HepG2 (cell line): ENCODE measurements at regions of chr3 and their contacts with region 1.

Region 1: DNA sequence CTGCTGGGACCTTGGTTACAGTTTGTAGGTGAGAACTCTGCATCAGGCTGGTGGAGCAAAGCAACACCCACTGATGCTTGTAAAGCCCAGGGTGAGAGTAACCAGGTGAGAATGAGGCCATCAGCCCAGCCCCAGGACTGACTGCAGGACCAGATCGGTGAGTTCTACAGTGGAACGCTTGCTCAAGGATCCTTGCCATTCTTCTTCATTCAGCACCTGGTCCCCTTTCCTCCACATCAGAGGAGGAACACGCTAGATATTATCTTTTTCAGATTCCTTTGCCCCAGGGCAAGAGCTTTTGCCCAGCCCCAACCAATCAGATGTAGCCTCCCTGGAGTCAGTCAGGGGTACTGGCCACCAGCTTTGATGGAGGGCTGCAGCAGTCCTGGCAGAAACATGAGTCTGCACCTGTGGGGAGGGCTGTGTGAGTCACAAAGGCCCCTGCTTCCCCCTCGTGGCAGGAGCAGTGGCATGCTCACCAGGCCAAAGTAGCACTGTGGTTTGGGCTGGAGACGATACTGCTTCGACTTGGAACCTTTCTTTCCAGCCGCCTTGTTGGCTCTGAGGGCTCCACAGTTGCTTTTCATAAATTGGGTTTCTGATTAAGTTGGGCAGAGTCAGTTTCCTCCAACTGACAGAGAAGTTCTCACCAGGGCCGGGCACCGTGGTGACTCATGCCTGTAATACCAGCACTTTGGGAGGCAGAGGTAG is 3.5 kb upstream of the SHISA5 start:
- DNase-seq: peak; percentile 74
- ATAC-seq: peak; percentile 86
- H3K4me3 ChIP-seq: peak overlapping the region in 1 of 3 experiments; percentile 25; a peak in 1 of 6 replicates
- H3K27ac ChIP-seq: no peak overlapping the region
- H3K4me1 ChIP-seq: peaks cover 46% of the 10 kb centered on the region
- H3K27me3 ChIP-seq: peaks cover 0 to 8% of the 10 kb centered on the region in 2 experiments; a peak in 2 of 5 replicates
- CTCF ChIP-seq: peak; percentile 98
- EP300 ChIP-seq: no peak
- POLR2A ChIP-seq: no peak
- RAD21 ChIP-seq: peak; percentile 95

Region 2: DNA sequence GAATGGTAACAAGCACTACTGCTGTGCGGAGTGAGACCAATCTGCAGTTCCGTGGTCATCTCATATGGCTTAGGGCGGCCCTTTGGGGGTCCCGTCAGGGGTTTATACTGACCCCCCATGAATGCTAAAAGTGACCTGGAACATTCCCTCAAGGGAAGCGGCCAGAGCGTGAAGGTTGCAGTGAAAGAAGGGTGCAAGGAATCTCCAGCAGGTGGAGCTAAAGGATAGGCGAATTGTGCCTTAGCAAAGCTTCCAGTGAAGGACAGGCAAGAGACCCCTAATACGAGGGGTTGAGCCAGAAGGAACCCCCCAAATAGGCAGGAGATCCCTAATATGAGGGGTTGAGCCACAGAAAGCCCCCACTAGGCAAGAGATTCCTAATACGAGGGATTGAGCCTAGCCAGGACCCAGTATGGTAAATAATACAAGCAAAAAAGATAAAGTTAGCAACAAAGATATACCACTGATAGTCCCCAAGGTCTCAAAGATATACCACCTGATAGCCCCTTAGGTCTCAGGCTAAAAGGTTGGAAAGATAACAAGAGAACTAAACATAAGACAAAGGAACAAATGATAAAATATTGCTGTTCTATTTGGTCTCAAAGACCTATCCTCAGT is 233.8 kb before region 1 on chr3:
- CTCF ChIA-PET with region 1: interaction called, 8 read pairs
- POLR2A ChIA-PET with region 1: no interaction called
- in situ Hi-C with region 1: no loop called
- intact Hi-C with region 1: loop called (anchors 5 kb)
- DNase-seq: peak; percentile 66
- ATAC-seq: peak; percentile 85
- H3K4me3 ChIP-seq: no peak overlapping the region
- H3K27ac ChIP-seq: no peak overlapping the region
- H3K4me1 ChIP-seq: no peaks in the 10 kb centered on the region
- H3K27me3 ChIP-seq: no peaks in the 10 kb centered on the region; a peak in 1 of 5 replicates
- CTCF ChIP-seq: peak; percentile 90
- EP300 ChIP-seq: no peak
- POLR2A ChIP-seq: no peak
- RAD21 ChIP-seq: peak; percentile 81

Region 3: DNA sequence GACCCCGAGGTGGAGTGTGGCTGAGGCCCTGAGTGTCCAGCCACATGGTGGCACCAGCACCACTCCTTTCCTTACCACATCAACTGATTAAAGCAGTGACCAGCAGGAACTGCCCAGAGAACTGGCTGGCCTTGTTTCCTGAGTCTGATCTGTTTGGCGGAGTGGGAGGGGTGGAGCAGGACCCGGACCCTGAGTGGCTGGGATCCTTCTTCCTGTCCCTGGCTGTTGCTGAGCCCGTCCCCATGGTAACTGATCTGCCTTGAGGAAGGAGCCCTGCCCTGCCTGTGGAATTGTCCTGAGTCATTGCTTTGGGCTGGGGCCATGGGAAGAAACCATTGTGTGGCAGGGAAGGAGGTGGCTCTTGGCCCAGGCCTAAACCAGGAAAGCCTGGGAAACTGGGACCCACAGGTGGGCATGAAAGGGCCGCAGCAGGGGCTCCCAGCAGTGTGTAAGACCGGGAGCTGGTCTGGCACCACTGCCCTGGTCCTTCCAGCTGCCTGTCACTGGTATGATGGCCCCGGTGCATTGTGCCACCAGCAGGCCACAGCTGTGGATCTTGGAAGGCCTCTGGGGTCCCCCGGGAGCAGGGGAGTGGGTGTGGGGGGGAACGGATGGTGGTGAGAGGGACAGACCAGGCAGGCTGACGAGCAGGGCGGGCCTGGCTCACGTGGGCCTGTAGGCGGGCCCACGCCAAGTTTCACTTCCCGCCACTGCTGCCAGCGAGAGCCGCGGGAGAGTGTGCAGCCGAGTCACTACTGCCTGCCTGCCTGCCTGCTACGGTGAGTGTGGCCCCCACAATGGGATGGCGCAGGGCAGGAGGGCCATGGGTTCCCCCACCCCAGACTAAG is 41.8 kb before region 1 on chr3:
- CTCF ChIA-PET with region 1: interaction called, 39 read pairs
- POLR2A ChIA-PET with region 1: interaction called, 5 read pairs
- in situ Hi-C with region 1: loop called (anchors 5 kb)
- intact Hi-C with region 1: loop called (anchors 1 kb)
- DNase-seq: peak; percentile 96
- ATAC-seq: peak; percentile 93
- H3K4me3 ChIP-seq: no peak overlapping the region
- H3K27ac ChIP-seq: peak overlapping the region; percentile 85
- H3K4me1 ChIP-seq: peaks cover 51% of the 10 kb centered on the region
- H3K27me3 ChIP-seq: no peaks in the 10 kb centered on the region
- CTCF ChIP-seq: peak; percentile 97
- EP300 ChIP-seq: peak in 1 of 2 experiments; percentile 23; a peak in 2 of 4 replicates
- POLR2A ChIP-seq: no peak
- RAD21 ChIP-seq: peak; percentile 98

Region 4: DNA sequence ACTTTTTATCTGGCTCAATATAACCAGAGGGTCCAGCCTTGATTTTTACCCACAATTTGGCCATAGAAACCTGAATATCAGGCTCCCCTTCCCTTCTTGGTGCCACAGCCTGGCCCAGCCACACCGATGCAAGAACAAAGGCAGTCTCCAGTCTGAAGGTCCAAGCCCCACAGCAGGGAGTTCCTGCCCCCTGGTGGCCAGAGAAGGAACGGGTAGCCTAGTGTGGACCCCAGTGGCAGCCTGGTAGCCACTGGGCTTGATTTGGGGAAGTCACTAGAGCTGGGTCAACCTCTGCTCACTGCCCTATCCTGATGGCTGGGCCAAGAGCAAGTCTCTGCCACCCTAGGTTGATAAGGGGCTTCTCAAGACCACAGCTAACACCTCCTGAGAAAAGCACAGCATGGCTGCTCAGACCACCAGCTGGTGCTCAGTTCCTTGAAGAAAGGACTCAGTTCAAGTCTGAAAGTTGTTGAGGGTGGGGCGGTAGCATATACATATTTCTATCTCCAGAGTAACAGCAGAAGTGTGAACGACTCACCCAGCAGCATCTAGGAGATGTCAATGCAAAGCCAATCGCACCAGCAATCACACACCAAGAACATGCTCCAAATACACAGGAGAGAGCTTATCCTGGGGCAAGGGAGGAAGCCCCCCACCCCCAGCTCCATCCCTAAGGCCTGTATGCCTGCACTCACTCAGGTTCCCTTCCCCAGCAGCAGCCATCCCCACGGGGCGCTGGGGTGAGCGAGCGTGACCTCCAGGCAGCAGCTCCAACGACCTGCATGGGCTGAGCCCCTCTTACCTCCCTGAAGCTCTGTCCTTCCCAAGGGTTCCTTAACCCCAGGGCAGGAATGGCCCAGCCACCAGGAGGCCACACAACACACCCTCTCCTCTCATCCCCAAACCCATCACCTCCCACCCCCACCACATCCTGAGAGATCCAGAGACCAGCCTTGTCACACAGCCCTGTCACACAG is 41.5 kb after region 1 on chr3:
- CTCF ChIA-PET with region 1: no interaction called
- POLR2A ChIA-PET with region 1: no interaction called
- in situ Hi-C with region 1: no loop called
- intact Hi-C with region 1: loop called (anchors 5 kb)
- DNase-seq: peak; percentile 67
- ATAC-seq: peak; percentile 91
- H3K4me3 ChIP-seq: no peak overlapping the region
- H3K27ac ChIP-seq: no peak overlapping the region
- H3K4me1 ChIP-seq: peaks cover 65% of the 10 kb centered on the region
- H3K27me3 ChIP-seq: no peaks in the 10 kb centered on the region
- CTCF ChIP-seq: peak; percentile 93
- EP300 ChIP-seq: no peak
- POLR2A ChIP-seq: no peak
- RAD21 ChIP-seq: peak; percentile 83

Region 5: DNA sequence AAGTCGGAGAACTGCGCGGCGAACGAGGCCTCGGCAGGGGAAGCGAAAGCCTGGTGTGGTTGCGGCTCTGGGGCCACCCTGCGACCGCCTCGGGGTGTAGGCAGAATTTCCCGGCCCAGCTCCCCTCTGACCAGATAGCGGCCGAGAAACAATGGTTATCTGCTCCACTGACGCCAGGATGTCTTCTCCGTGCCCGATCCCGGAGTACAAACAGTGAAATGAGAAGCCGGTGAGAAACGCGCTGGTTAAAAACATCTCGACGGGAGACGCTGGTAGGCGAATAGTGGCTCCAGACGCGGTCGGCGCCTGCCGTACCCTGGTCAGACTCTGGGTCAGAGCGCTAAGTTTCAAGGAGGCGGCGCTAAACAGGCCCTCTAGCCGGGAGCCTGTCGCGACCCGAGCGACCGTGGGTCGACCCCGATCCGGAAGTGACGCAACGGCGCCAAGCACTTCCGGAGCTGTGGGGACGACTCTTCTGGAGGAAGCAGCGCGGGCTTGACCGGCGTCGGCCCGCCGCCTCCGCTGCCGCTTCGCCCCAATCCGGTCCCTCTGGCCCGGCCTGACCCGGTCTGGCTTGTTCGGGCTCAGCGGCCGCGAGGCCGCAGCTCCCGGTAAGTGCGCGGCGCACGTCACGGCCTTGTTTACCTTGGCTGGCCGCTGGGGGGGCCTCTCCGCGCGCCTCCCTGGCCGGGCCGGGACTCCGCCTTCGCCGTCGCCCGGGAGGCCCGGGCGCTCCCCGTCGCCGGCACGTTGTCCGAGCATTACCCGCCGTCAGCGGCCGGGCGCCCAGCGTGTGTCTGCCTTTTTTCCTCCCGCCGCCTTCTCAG is 411.1 kb after region 1 on chr3 and contains the start of gene ARIH2:
- CTCF ChIA-PET with region 1: no interaction called
- POLR2A ChIA-PET with region 1: no interaction called
- in situ Hi-C with region 1: no loop called
- intact Hi-C with region 1: no loop called
- DNase-seq: peak; percentile 87
- ATAC-seq: peak; percentile 92
- H3K4me3 ChIP-seq: peak within 1 kb of the TSS; percentile 73 to 89 (median 88)
- H3K27ac ChIP-seq: peak within 1 kb of the TSS; percentile 95
- H3K4me1 ChIP-seq: peaks cover 25% of the 10 kb centered on the region
- H3K27me3 ChIP-seq: no peaks in the 10 kb centered on the region; a peak in 1 of 5 replicates
- CTCF ChIP-seq: peak; percentile 67
- EP300 ChIP-seq: no peak; a peak in 1 of 4 replicates
- POLR2A ChIP-seq: peak; percentile 84 to 93
- RAD21 ChIP-seq: no peak; the same call in 1 of the 2 replicates
- total RNA-seq, gene ARIH2: 83.3 and 86.9 TPM in 2 replicates